ENCODE measurements at regions of chr14 and their contacts with region 1.

Region 1: DNA sequence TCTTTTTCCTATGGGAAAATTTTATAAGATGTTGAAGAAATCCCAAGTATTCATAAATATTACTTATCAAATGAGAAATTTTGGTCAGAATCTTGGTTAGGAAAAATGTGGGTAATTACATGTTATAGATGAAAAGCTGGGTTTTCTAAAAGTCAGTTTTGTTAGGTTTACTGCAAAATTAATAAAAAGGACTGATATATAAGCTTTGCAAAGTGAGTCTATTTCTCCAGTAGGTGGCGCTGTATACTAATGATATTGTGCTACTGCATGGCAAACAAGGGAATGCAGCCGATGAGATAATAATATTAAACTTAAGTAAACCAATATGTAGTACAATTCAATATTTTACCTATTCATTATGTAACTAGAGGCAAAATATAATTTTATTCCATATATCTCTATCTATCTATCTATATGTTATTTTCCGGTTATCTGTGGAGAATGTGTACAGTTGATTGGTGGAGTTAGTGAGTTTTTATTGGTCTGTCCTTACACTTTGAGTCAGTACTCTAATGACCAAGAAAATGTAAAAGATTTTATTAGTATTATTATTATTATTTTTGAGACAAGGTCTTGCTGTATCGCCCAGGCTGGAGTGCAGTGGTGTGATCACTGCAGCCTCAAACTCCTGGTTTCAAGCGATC is 32.9 kb downstream of the MIPOL1 start:
- DNase-seq: peak; percentile 29
- H3K4me3 ChIP-seq: no peak overlapping the region
- CTCF ChIP-seq: peak; percentile 62

Region 2: GRCh38 chr14:37197421-37198272 is 33.0 kb before region 1 on chr14 and contains the start of gene MIPOL1:
- CTCF ChIA-PET with region 1: interaction called, 20 read pairs
- POLR2A ChIA-PET with region 1: no interaction called
- DNase-seq: peak; percentile 26
- H3K4me3 ChIP-seq: peak within 1 kb of the TSS; percentile 86
- CTCF ChIP-seq: peak; percentile 39

Region 3: DNA sequence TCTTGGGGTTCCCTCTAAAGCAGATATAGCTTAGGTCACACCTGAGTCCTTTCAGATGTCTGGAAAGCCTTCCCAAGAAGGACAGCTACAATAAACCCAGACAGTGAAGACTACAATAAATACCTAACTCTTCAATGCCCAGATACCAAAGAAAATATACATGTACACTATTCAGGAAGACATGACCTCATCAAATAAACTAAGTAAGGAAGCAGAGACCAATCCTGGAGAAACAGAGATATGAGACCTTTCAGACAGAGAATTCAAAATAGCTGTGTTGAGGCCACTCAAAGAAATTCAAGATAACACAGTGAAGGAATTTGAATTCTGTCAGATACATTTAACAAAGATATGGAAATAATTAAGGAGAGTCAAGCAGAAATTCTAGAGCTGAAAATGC is 17.7 kb before region 1 on chr14:
- CTCF ChIA-PET with region 1: interaction called, 22 read pairs
- POLR2A ChIA-PET with region 1: no interaction called
- DNase-seq: no peak
- H3K4me3 ChIP-seq: no peak overlapping the region
- CTCF ChIP-seq: no peak

Region 4: GRCh38 chr14:37241198-37241597 is 10.5 kb after region 1 on chr14:
- CTCF ChIA-PET with region 1: interaction called, 101 read pairs
- POLR2A ChIA-PET with region 1: no interaction called
- DNase-seq: no peak
- H3K4me3 ChIP-seq: no peak overlapping the region
- CTCF ChIP-seq: no peak

Region 5: DNA sequence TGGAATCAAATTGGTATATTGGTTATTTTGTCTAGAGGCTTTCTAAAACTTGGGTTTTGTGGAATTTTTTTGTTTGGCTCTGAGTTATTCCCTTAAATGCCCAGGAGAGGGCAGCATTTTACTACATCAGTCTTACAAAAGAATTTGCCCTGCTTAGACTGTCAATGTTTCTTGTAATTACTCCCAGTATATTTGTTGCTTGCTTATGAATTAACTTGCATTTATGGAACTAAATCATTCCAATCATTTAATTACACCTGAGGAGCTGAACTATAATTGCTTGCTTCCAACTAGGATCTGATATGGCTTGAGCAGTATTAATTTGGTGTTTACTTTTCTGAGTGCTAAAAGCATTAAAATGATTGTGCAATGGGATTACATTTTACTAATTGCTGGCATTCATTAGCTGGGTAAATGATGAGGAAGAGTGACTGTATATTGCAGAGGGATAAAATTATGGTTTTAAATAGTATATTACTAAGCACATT is 15.8 kb after region 1 on chr14:
- CTCF ChIA-PET with region 1: interaction called, 101 read pairs
- POLR2A ChIA-PET with region 1: no interaction called
- DNase-seq: peak; percentile 19
- H3K4me3 ChIP-seq: no peak overlapping the region
- CTCF ChIP-seq: peak; percentile 19

Region 6: GRCh38 chr14:37384870-37385596 is 154.4 kb after region 1 on chr14:
- CTCF ChIA-PET with region 1: no interaction called
- POLR2A ChIA-PET with region 1: no interaction called
- DNase-seq: no peak
- H3K4me3 ChIP-seq: no peak overlapping the region
- CTCF ChIP-seq: no peak

Region 7: GRCh38 chr14:37874429-37875191 is 643.9 kb after region 1 on chr14:
- CTCF ChIA-PET with region 1: interaction called, 57 read pairs
- POLR2A ChIA-PET with region 1: no interaction called
- DNase-seq: no peak
- H3K4me3 ChIP-seq: no peak overlapping the region
- CTCF ChIP-seq: peak; percentile 94

Region 8: DNA sequence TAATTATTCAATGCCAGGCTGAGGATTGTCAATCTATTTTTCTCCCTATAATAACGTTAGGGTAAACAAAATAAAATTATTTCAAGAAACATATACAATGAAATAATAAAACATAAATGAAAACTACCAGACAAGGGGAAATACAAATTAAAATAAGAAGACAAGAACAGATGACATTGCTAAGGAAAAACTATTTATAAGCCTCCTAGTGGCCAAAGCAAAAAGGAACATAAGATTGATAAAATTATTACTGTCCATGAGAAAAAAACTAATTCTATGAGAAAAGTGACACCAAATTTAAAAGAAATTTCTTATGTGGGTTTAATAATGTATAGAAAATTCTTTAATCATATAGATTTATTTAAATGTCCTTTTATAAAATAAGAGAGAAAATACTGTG is 659.4 kb after region 1 on chr14:
- CTCF ChIA-PET with region 1: interaction called, 10 read pairs
- POLR2A ChIA-PET with region 1: no interaction called
- DNase-seq: no peak
- H3K4me3 ChIP-seq: no peak overlapping the region
- CTCF ChIP-seq: peak; percentile 9